Naive thymus-derived CD8-positive, alpha-beta T cell (primary cell): ENCODE measurements at regions of chr1 and their contacts with region 1.

Region 1: DNA sequence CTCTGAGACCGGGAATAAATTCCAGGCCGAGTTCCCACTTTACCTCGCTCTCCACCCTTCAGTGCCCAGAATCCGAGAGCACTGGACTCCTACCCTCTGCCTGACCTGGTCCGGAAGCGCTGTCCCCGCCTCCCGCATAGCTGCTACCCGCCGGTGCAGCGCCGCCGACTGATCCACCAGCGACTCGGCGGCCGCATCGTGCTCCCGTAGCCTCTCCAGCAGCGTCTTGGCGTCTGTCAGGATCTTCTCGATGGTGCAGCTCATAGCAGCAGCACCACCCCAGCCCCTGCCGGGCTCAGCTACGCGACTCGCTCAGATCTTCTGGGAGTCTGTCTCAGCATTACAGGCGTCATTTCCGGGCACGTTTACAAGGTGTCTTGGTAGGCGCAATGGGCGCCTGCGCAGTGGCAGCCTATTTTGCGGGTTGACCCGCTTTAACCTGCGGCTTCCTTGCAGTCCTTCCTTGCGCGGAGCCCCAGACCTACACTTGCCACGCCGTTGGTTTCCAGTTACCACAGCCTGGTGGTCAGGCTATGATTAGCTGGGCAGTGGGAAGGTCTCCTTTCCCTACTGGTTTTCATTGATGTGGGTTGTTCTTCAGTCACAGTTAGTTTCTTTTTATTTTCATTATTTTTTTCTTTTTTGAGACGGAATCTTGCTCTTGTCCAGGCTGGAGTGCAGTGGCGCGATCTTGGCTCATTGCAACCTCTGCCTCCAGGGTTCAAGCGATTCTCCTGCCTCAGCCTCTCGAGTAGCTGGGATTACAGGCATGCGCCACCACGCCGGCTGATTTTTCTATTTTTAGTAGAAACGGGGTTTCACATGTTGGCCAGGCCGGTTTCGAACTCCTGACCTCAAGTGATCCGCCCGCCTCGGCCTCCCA is at the start of gene SIKE1:
- DNase-seq: peak; percentile 84 to 98 (median 93)
- ATAC-seq: peak; percentile 98 to 99
- H3K4me3 Mint-ChIP-seq: peak within 1 kb of the TSS; percentile 97 to 100 (median 100)
- H3K27ac Mint-ChIP-seq: peak within 1 kb of the TSS; percentile 98 to 100 (median 99)
- H3K4me1 Mint-ChIP-seq: peaks cover 9 to 35% (median 26%) of the 10 kb centered on the region in 4 donors
- H3K27me3 Mint-ChIP-seq: peaks cover 0 to 2% (median 0%) of the 10 kb centered on the region in 5 donors
- polyA plus RNA-seq, gene SIKE1: 28.9 to 31.0 (median 29.9) TPM

Region 2: DNA sequence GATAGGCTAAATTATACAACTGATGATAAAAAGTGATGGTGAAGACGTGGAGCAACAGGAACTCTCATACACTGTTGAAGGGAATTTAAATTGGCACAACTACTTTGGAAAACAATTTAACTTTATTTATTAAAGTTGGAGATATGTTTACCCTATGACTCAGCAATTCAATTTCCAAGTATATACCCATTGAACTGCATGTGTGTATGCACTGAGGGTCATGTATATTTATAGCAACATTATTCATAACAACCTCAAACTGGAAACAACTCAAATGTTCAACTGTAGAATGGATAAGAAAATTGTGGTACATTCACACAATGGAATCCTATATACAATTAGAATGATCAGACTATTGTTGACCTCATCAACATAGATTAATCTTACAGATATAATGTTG is 182.6 kb before region 1 on chr1:
- POLR2A ChIA-PET with region 1: no interaction called
- DNase-seq: no peak
- ATAC-seq: no peak
- H3K4me3 Mint-ChIP-seq: no peak overlapping the region
- H3K27ac Mint-ChIP-seq: no peak overlapping the region
- H3K4me1 Mint-ChIP-seq: no peaks in the 10 kb centered on the region
- H3K27me3 Mint-ChIP-seq: peaks cover 0 to 22% (median 5%) of the 10 kb centered on the region in 5 donors

Region 3: GRCh38 chr1:114716304-114717170 is 64.0 kb before region 1 on chr1 and contains the start of gene NRAS:
- POLR2A ChIA-PET with region 1: interaction called, 12 read pairs
- DNase-seq: peak; percentile 93 to 97 (median 95)
- ATAC-seq: peak; percentile 94
- H3K4me3 Mint-ChIP-seq: peak within 1 kb of the TSS; percentile 92 to 98 (median 98)
- H3K27ac Mint-ChIP-seq: peak within 1 kb of the TSS; percentile 96 to 100 (median 99)
- H3K4me1 Mint-ChIP-seq: peaks cover 13 to 30% (median 26%) of the 10 kb centered on the region in 4 donors
- H3K27me3 Mint-ChIP-seq: no peaks in the 10 kb centered on the region
- polyA plus RNA-seq, gene NRAS: 25.5 to 33.3 (median 29.6) TPM

Region 4: GRCh38 chr1:114757455-114758250 is 22.9 kb before region 1 on chr1 and contains the start of gene CSDE1:
- POLR2A ChIA-PET with region 1: interaction called, 20 read pairs
- DNase-seq: peak; percentile 88 to 99 (median 97)
- ATAC-seq: peak; percentile 84 to 85
- H3K4me3 Mint-ChIP-seq: peak within 1 kb of the TSS; percentile 98 to 100 (median 99)
- H3K27ac Mint-ChIP-seq: peak within 1 kb of the TSS; percentile 99 to 100 (median 100)
- H3K4me1 Mint-ChIP-seq: peaks cover 27 to 60% (median 54%) of the 10 kb centered on the region in 4 donors
- H3K27me3 Mint-ChIP-seq: peaks cover 0 to 1% (median 0%) of the 10 kb centered on the region in 5 donors
- polyA plus RNA-seq, gene CSDE1: 354 to 411 (median 407) TPM

Region 5: DNA sequence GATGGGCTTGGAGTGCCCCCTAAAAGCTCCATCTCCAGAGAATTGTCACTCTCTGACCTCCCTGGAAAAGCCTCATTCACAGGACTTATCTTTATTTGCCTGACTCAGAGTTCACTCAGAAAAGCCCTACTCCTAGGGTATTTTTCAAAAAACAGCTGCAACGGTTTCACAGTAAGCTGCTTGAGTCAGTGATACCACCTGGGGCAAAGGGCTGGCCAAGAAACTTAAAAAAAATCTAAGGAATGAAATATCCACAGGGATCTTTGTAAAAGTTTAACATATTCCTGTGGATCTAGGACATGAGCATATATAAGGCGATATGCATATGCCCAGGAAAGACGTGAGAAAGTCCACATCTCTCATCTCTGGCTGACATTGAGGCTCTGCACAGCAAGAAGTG is 342.5 kb after region 1 on chr1:
- POLR2A ChIA-PET with region 1: interaction called, 11 read pairs
- DNase-seq: no peak
- ATAC-seq: no peak
- H3K4me3 Mint-ChIP-seq: no peak overlapping the region
- H3K27ac Mint-ChIP-seq: no peak overlapping the region
- H3K4me1 Mint-ChIP-seq: no peaks in the 10 kb centered on the region
- H3K27me3 Mint-ChIP-seq: peaks cover 10 to 21% (median 12%) of the 10 kb centered on the region in 5 donors